Motor neuron (in vitro differentiated cells): ENCODE measurements at regions of chr2 and their contacts with region 1.

Region 1: GRCh38 chr2:186460465-186460864 is 25.6 kb upstream of the ZC3H15 start:
- ATAC-seq: peak in 2 of 8 experiments; percentile 34 to 50
- H3K4me3 ChIP-seq: no peak overlapping the region
- H3K27ac ChIP-seq: no peak overlapping the region
- H3K4me1 ChIP-seq: no peaks in the 10 kb centered on the region

Region 2: GRCh38 chr2:186017278-186017677 is 443.2 kb before region 1 on chr2:
- in situ Hi-C with region 1: no loop called
- ATAC-seq: no peak
- H3K4me3 ChIP-seq: no peak overlapping the region
- H3K27ac ChIP-seq: no peak overlapping the region
- H3K4me1 ChIP-seq: no peaks in the 10 kb centered on the region

Region 3: DNA sequence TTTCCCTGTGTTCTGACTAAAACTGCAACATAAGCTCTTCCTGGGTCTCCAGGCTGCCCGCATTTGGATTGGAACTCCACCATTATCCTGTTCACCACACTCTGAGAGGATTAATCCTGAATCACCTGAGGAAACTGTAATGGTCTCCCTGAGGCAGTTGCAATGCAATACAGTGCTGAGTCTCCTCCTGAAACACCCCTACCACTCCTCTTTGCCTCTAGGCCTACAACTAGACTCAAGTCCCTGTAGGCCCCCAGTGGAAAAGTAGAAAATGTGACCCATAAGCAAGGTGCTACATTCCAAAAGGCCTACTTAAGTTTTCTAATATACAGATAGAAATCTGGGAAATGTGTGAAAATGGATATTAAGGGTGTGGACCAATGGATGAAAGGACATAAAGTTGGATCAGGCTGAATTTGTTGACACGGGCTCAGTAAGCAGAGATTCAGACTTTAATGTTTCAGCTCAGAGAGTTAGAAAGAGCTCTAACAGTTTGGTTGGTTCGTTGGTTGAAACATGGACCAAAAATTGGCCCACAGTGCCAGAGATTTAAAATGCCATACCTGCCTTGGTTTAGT is 196.7 kb before region 1 on chr2:
- in situ Hi-C with region 1: no loop called
- ATAC-seq: peak in 2 of 8 experiments; percentile 60 to 64
- H3K4me3 ChIP-seq: no peak overlapping the region
- H3K27ac ChIP-seq: no peak overlapping the region
- H3K4me1 ChIP-seq: no peaks in the 10 kb centered on the region

Region 4: GRCh38 chr2:186274936-186275575 is 185.4 kb before region 1 on chr2:
- in situ Hi-C with region 1: loop called in 1 of 9 experiments (anchors 25 kb)
- ATAC-seq: peak in 3 of 8 experiments; percentile 40 to 58 (median 57)
- H3K4me3 ChIP-seq: no peak overlapping the region
- H3K27ac ChIP-seq: no peak overlapping the region
- H3K4me1 ChIP-seq: no peaks in the 10 kb centered on the region